ENCODE measurements at regions of chr5 and their contacts with region 1.

Region 1: GRCh38 chr5:69234457-69235268 is at the start of gene CDK7:
- DNase-seq: peak; percentile 93
- H3K4me3 Mint-ChIP-seq: peak within 1 kb of the TSS; percentile 88
- H3K27ac Mint-ChIP-seq: peak within 1 kb of the TSS; percentile 84
- H3K4me1 Mint-ChIP-seq: peaks cover 37% of the 10 kb centered on the region
- H3K27me3 Mint-ChIP-seq: no peaks in the 10 kb centered on the region
- CTCF ChIP-seq: no peak
- total RNA-seq, gene CDK7: 31.8 and 38.5 TPM in 2 replicates

Region 2: GRCh38 chr5:69189162-69190086 is 45.2 kb before region 1 on chr5 and contains the start of gene CENPH:
- CTCF ChIA-PET with region 1: no interaction called
- intact Hi-C with region 1: loop called (anchors 10 kb)
- DNase-seq: peak; percentile 95
- H3K4me3 Mint-ChIP-seq: peak within 1 kb of the TSS; percentile 91
- H3K27ac Mint-ChIP-seq: peak within 1 kb of the TSS; percentile 97
- H3K4me1 Mint-ChIP-seq: no peaks in the 10 kb centered on the region
- H3K27me3 Mint-ChIP-seq: no peaks in the 10 kb centered on the region
- CTCF ChIP-seq: no peak
- total RNA-seq, gene CENPH: 17.0 and 17.7 TPM in 2 replicates